ENCODE measurements at regions of chr17 and their contacts with region 1.

Region 1: GRCh38 chr17:77167472-77168306 is 26.9 kb downstream of the SEC14L1 start:
- DNase-seq: no peak
- ATAC-seq: no peak
- H3K4me3 ChIP-seq: no peak overlapping the region
- H3K27ac ChIP-seq: no peak overlapping the region
- H3K4me1 ChIP-seq: peaks cover 13% of the 10 kb centered on the region
- H3K27me3 ChIP-seq: no peaks in the 10 kb centered on the region
- CTCF ChIP-seq: no peak

Region 2: DNA sequence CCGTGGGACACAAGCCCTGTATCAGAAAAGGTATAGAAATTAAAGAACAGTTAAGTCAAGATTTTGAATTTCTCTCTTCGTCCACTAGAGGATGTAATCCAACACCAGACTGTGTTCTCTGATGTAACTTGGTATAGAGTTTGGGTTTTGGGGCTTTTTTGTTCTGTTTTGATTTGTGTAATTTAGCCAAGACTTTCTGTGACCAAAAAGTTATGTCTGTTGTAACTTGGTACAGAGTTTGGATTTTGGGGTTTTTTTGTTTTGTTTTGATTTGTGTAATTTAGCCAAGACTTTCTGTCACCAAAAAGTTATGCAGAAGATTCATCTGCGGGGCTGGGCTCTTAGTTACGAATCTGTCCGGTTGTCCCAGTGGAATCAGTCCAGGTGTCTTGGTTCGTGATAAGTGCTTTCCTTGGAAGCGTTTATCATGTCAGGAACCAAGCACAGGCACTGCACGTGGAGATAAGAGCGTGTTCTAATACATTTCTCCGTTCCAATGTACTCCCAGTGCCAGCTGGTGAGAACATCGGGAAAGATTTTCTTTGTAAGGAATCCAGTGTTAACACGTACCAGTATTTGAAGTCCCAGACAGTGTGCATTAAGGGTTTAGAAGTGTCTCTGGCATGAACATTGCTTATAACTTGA is 71.0 kb before region 1 on chr17:
- CTCF ChIA-PET with region 1: interaction called, 11 read pairs
- POLR2A ChIA-PET with region 1: interaction called, 7 read pairs
- in situ Hi-C with region 1: no loop called
- intact Hi-C with region 1: no loop called
- DNase-seq: peak; percentile 41
- ATAC-seq: no peak; the same call in 1 of the 2 replicates
- H3K4me3 ChIP-seq: no peak overlapping the region
- H3K27ac ChIP-seq: peak overlapping the region; percentile 81
- H3K4me1 ChIP-seq: peaks cover 18% of the 10 kb centered on the region; the same call in 1 of the 2 replicates
- H3K27me3 ChIP-seq: no peaks in the 10 kb centered on the region
- CTCF ChIP-seq: peak; percentile 94

Region 3: DNA sequence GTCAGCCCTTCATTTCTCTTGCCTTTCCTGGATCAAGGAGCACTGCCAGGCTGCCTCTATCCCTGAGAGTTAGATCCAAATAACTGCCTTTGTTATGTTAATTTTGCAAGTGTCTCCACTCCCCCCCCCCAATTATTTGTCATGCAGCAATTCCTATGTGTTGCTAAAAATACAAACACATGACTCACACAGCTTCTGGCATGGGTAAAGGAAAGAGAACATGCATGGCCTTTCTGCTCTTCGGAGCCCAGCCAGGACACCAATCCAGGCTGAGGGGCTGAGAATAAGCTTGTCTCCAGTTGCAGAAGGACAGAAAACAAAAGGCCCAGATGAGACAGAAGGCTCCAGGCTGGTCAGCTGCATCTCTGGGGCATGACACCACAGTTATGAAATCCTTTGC is 642.8 kb after region 1 on chr17:
- CTCF ChIA-PET with region 1: no interaction called
- POLR2A ChIA-PET with region 1: no interaction called
- in situ Hi-C with region 1: no loop called
- intact Hi-C with region 1: no loop called
- DNase-seq: no peak
- ATAC-seq: no peak
- H3K4me3 ChIP-seq: no peak overlapping the region
- H3K27ac ChIP-seq: no peak overlapping the region
- H3K4me1 ChIP-seq: no peaks in the 10 kb centered on the region
- H3K27me3 ChIP-seq: no peaks in the 10 kb centered on the region
- CTCF ChIP-seq: no peak